Activated naive CD8-positive, alpha-beta T cell treated with anti-CD3 and anti-CD28 coated beads, Interleukin-2, amount 10 ng/mL, durations not matched to agents 7 days and 5 days (primary cell): ENCODE measurements at regions of chr16 and their contacts with region 1.

Region 1: DNA sequence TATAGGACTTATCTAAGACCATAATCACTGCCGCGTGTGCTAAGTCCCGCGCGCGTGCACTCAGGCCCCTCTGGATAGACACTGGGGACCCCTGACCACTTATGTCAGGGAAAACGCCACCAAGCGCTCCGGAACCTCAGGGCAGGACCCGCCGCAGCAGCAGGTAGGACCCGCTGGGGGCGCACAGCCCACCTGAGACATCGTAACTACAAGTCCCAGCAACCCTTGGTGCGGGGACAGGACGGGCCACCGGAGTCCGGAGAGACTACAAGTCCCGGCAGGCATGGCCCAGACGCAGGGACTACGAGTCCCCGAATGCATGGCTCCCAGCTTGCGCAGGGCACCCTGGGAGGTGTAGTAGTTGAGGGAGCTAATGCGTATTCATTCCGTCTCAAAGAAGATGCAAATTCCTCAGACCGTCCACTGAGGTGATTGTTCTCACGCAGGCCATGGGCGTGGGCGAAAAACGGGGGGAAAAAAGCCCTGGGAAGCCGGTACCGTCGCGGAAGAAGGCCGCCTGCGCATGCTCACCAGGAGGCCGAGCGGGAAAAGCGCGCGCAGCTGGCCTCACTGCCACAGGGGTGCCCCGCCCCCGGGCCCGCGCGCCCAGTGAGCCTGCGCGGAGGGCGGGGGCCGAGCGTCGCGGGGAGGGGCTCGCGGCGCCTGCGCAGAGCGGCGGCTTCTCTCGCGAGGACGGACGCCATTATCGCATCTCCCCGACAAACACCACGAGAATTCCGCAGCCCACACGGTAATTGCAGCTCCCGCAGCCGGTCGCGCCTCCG is at the start of gene BANP:
- DNase-seq: peak; percentile 98
- ATAC-seq: peak; percentile 95
- H3K4me3 Mint-ChIP-seq: peak within 1 kb of the TSS; percentile 98
- H3K27ac Mint-ChIP-seq: peak within 1 kb of the TSS; percentile 100
- H3K4me1 Mint-ChIP-seq: peaks cover 43% of the 10 kb centered on the region
- H3K27me3 Mint-ChIP-seq: no peaks in the 10 kb centered on the region
- total RNA-seq, gene BANP: 50.2 to 55.1 TPM

Region 2: DNA sequence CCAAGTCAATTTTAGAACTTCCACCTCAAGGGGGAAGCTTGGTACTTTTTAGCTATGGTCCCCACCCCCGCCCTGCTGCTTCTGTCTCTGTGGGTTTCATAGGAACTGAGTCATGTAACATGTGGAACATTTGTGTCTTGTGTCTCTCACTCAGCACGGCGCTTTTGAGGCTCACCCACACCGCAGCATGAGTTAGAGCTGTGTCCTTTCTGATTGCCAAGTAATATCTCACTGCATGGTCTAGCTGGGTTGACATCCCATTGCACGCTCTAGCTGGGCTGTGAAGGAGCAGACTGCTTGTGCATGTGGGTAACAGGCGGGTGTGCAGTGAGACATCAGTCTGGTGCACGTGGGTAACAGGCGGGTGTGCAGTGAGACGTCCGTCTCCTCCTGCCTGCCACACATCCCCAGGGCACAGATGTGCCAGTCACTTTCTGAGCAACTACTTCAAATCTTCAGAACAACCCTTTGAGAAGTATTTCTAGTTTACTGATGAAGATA is 55.3 kb before region 1 on chr16:
- POLR2A ChIA-PET with region 1: interaction called, 11 read pairs
- DNase-seq: peak; percentile 77
- ATAC-seq: peak; percentile 83
- H3K4me3 Mint-ChIP-seq: peak overlapping the region; percentile 73
- H3K27ac Mint-ChIP-seq: peak overlapping the region; percentile 96
- H3K4me1 Mint-ChIP-seq: peaks cover 38% of the 10 kb centered on the region
- H3K27me3 Mint-ChIP-seq: no peaks in the 10 kb centered on the region